Common myeloid progenitor, CD34-positive (primary cell): ENCODE measurements at regions of chr15 and their contacts with region 1.

Region 1: GRCh38 chr15:32844118-32844711 is 126.4 kb downstream of the GREM1 start:
- DNase-seq: peak; percentile 18 to 27 (median 22)
- H3K4me3 ChIP-seq: no peak overlapping the region
- H3K27ac ChIP-seq: no peak overlapping the region
- H3K4me1 ChIP-seq: no peaks in the 10 kb centered on the region
- H3K27me3 ChIP-seq: peaks cover 0 to 8% (median 0%) of the 10 kb centered on the region in 5 experiments

Region 2: GRCh38 chr15:32834156-32834555 is 10.1 kb before region 1 on chr15:
- CTCF ChIA-PET with region 1: interaction called, 16 read pairs
- POLR2A ChIA-PET with region 1: no interaction called
- DNase-seq: peak in 2 of 3 donors; percentile 37 to 49
- H3K4me3 ChIP-seq: no peak overlapping the region
- H3K27ac ChIP-seq: no peak overlapping the region
- H3K4me1 ChIP-seq: peaks cover 0 to 7% (median 0%) of the 10 kb centered on the region in 4 experiments
- H3K27me3 ChIP-seq: peaks cover 0 to 10% (median 0%) of the 10 kb centered on the region in 5 experiments

Region 3: GRCh38 chr15:33182278-33182905 is 338.2 kb after region 1 on chr15:
- CTCF ChIA-PET with region 1: no interaction called
- POLR2A ChIA-PET with region 1: no interaction called
- DNase-seq: no peak
- H3K4me3 ChIP-seq: no peak overlapping the region
- H3K27ac ChIP-seq: no peak overlapping the region
- H3K4me1 ChIP-seq: peaks cover 0 to 5% (median 0%) of the 10 kb centered on the region in 4 experiments
- H3K27me3 ChIP-seq: no peaks in the 10 kb centered on the region